ENCODE measurements at regions of chr1 and their contacts with region 1.

Region 1: GRCh38 chr1:32335790-32336590 is at the start of gene MARCKSL1:
- DNase-seq: no peak
- H3K4me3 ChIP-seq: peak within 1 kb of the TSS; percentile 85
- H3K27ac ChIP-seq: no peak within 1 kb of the TSS
- H3K27me3 ChIP-seq: no peaks in the 10 kb centered on the region
- CTCF ChIP-seq: no peak
- polyA plus RNA-seq, gene MARCKSL1: 196 and 200 TPM in 2 replicates

Region 2: GRCh38 chr1:32179443-32180185 is 156.4 kb before region 1 on chr1 and contains the start of gene TXLNA:
- CTCF ChIA-PET with region 1: no interaction called
- POLR2A ChIA-PET with region 1: interaction called, 10 read pairs
- DNase-seq: peak; percentile 68
- H3K4me3 ChIP-seq: peak within 1 kb of the TSS; percentile 81
- H3K27ac ChIP-seq: peak within 1 kb of the TSS; percentile 97
- H3K27me3 ChIP-seq: no peaks in the 10 kb centered on the region
- CTCF ChIP-seq: no peak
- polyA plus RNA-seq, gene TXLNA: 49.3 and 52.8 TPM in 2 replicates

Region 3: DNA sequence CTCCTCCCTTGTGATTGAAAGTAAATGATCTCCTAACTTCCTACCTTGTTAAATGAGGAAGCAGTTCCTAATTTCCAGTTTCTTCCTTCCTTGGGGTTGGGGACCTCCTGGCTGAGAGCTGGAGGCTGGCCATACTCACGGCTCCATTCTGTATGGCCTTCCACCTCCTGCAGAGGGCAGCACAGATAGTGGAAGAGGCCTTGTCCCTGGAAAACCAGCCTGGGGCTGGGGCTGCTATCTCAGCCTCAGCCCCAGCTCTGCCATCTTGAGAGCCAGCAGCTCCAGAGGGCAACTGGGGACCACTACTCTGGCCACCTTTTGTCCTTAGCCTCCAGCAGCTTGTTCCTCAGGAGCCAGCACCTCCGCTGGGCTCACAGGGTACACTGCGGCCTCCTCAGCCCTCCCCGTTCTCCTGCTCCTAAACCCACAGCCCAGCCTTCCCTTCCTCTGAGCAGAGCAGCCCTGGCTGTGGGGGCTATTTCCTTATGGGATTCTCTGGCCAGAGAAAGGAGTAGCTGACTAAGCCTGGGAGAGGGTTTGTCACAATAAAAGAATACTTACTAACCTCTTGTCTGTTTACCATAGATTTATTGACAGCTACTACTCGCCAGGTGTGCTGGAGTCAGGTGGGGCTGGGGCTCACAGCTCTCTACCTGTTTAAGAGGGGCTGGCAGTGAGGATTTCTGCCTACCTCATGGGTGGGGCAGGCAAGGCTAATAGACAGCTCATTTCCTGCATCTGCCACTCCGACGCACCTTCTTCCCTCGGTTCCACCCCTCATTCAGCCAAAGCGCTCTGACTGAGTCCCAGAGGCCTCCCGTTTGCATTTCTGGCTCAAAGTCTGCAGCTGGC is 120.1 kb before region 1 on chr1:
- CTCF ChIA-PET with region 1: interaction called, 13 read pairs
- POLR2A ChIA-PET with region 1: interaction called, 29 read pairs
- DNase-seq: no peak
- H3K4me3 ChIP-seq: no peak overlapping the region
- H3K27ac ChIP-seq: no peak overlapping the region
- H3K27me3 ChIP-seq: no peaks in the 10 kb centered on the region
- CTCF ChIP-seq: peak; percentile 90

Region 4: DNA sequence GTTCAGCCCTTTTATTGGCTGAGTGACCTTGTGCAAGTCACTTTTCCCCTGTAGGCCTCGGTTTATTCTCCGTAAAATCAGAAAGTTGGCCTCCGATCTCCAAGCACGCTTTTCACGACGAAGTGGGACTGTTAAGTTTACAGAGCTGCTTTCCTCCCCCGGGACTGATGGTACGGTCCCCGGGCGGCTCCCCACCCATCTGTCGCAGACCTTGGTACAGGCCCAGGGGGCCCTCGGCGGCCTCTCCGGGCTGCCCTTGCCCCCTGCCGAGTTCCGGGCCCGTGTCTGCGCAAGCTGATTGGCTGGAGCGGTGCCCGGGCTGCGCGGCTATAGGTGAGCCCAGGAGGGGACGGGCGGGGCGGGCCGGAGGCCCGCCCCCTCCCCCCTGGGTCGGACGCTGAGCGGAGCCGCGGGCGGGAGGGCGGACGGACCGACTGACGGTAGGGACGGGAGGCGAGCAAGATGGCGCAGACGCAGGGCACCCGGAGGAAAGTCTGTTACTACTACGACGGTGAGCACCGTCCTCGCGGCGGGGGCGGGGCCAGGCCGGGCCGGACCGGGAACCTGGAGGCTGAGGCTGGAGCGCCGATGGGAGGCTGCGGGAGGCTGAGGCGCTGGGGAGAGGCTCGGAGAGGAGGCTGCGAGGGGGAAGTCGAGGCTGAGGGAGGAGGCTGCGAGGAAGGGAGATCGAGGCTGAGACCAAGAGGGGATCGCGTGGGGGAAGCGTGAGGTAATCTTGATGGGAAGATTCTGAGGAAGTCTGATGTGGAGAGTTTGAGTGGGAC is 44.1 kb before region 1 on chr1 and contains the start of gene HDAC1:
- CTCF ChIA-PET with region 1: no interaction called
- POLR2A ChIA-PET with region 1: interaction called, 18 read pairs
- DNase-seq: peak; percentile 88
- H3K4me3 ChIP-seq: peak within 1 kb of the TSS; percentile 92
- H3K27ac ChIP-seq: peak within 1 kb of the TSS; percentile 57
- H3K27me3 ChIP-seq: no peaks in the 10 kb centered on the region
- CTCF ChIP-seq: no peak
- polyA plus RNA-seq, gene HDAC1: 157 and 172 TPM in 2 replicates

Region 5: GRCh38 chr1:32351399-32352238 is 15.6 kb after region 1 on chr1:
- CTCF ChIA-PET with region 1: interaction called, 3 read pairs
- POLR2A ChIA-PET with region 1: interaction called, 83 read pairs
- DNase-seq: peak; percentile 79
- H3K4me3 ChIP-seq: peak overlapping the region; percentile 71
- H3K27ac ChIP-seq: peak overlapping the region; percentile 75
- H3K27me3 ChIP-seq: no peaks in the 10 kb centered on the region
- CTCF ChIP-seq: peak; percentile 9; the same call in 1 of the 2 replicates

Region 6: DNA sequence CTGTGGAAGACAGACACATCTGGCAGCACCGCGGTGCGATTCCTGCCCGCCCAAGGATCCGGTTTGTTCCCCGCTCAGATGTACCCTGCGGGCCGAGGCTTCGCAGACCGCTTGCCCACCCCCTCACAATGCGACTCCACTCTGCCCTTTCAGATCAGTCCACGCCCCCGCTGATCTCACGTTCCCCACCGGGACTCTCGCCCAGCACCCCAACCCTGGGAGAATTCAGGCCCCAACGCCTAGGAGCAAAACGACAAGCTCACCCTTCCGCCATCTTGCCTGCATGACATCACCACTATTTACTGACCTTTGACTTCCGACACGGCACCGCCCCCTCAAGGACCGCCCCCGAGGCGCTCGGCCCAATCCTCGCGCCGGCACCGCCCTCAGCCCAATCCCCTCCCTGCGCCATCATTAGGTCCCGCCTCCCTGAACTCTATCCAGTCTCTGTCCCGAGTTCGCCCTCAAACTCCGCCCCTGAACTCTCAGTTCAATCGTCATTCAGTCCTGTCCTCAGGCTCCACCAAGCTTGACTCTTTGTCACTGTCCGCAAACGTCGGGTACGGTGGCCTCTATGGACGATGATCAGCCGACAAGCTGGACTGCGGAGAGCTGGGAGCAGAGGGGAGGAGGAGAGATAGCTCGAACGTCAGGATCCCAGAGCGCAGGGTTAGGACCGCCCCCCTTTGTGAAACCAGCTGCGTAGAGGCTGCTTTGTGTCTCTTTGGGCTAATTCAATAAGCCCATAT is 58.3 kb after region 1 on chr1 and contains the start of gene BSDC1:
- CTCF ChIA-PET with region 1: interaction called, 8 read pairs
- POLR2A ChIA-PET with region 1: interaction called, 27 read pairs
- DNase-seq: peak; percentile 93
- H3K4me3 ChIP-seq: peak within 1 kb of the TSS; percentile 90
- H3K27ac ChIP-seq: peak within 1 kb of the TSS; percentile 99
- H3K27me3 ChIP-seq: no peaks in the 10 kb centered on the region
- CTCF ChIP-seq: no peak
- polyA plus RNA-seq, gene BSDC1: 45.3 and 53.1 TPM in 2 replicates

Region 7: DNA sequence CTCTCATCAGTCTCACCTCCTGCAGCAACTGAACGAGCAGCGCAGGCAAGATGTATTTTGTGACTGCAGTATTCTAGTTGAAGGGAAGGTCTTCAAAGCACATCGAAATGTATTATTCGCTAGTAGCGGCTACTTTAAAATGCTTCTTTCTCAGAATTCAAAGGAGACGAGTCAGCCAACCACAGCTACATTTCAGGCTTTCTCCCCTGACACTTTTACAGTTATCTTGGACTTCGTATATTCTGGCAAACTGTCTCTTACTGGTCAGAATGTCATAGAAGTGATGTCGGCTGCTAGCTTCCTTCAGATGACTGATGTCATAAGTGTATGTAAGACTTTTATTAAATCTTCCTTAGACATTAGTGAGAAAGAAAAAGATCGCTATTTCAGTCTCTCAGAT is 257.0 kb after region 1 on chr1:
- CTCF ChIA-PET with region 1: no interaction called
- POLR2A ChIA-PET with region 1: no interaction called
- DNase-seq: no peak
- H3K4me3 ChIP-seq: no peak overlapping the region
- H3K27ac ChIP-seq: no peak overlapping the region
- H3K27me3 ChIP-seq: no peaks in the 10 kb centered on the region
- CTCF ChIP-seq: no peak

Measured in AG04450 (cell line).